ENCODE measurements at regions of chr7 and their contacts with region 1.

Region 1: DNA sequence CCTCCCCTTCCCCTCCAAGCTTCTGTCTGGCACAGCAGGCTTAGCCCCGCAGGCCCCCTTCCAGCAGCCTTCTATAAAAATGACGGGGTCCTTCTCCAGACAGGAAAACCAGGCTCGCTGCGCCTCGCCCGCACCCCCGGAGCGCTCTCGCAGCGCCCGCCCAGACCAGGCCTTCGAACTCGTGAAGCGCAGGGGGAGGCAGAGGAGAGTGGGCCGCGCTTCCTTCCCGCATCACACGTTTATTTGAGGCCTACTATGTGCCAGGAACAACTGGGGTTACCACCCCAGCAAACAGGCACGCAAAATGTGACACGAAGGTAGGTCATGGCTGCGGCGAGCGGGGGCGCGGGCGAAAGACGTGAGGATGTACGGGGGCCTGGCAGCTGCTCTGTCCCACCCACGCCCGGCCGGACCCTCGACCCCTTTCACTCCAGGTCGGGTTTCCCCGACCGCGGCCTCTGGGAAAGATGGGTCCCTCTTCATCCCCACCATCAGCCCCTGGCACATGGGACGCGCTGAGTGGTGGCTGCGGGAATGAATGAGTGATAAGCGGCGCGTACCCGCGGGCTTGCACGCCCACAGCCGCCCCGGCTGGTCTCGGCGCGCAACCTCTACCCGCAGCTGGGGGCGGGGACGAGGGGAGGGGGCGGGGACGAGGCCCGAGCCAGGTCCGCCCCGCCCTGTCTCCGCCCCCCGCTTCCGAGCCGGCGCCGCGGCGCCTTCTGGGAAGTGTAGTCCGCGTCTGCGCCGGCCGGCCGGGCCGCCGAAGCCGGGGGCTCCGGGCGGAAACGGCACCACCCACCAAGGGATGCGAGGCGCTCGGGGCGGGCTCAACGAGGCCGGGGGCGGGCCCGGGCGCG is 59.1 kb downstream of the ZNF467 start:
- DNase-seq: peak; percentile 97
- ATAC-seq: peak; percentile 89
- H3K4me3 Mint-ChIP-seq: peak overlapping the region; percentile 82
- H3K27ac Mint-ChIP-seq: peak overlapping the region; percentile 78
- H3K4me1 Mint-ChIP-seq: peaks cover 27% of the 10 kb centered on the region
- H3K27me3 Mint-ChIP-seq: no peaks in the 10 kb centered on the region

Region 2: GRCh38 chr7:149125863-149126661 is 588.2 kb before region 1 on chr7 and contains the start of gene ZNF425:
- CTCF ChIA-PET with region 1: no interaction called
- POLR2A ChIA-PET with region 1: no interaction called
- intact Hi-C with region 1: loop called in 1 of 2 experiments (anchors 2 kb)
- DNase-seq: peak; percentile 96
- ATAC-seq: peak; percentile 88
- H3K4me3 Mint-ChIP-seq: peak within 1 kb of the TSS; percentile 83
- H3K27ac Mint-ChIP-seq: peak within 1 kb of the TSS; percentile 99
- H3K4me1 Mint-ChIP-seq: peaks cover 21% of the 10 kb centered on the region
- H3K27me3 Mint-ChIP-seq: no peaks in the 10 kb centered on the region
- total RNA-seq, gene ZNF425: 0.43 to 0.95 TPM

Region 3: DNA sequence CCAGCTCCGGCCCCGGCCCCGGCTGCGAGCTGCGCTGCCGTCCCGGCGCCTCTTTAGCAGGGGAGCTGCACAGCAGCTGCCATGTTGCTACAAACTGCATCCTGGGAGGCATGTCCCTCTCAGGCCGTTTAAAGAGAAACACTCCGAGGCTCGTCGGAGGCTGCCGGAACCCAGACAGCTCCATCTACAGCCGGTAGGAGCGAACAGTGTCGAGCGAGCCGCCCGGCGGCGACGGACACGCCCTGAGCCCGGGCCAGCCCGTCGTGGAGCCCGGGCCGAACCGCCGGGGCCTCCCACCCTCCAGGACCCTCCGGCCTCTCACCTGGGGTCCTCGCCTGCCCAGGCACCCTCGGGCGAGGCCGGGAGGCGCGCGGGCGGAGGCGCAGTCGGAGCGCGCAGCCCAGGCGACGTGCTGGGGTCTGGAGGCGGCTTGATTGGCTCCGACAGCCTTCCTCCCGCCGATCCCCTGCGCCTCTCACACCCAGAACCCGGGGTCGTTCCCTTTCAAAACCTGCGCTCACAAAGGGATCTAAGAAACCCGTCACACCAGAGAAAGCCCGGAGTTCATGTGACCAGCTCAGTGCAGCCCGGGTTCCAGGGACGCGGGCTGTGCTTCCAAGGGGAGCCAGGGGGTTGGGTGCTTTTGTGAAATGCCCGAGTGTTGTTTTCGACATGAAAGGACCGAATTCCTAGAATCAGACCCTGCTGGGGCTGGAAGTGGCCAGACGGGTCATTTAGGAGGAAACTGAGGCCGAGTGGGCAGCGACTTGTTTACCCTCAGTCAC is 253.6 kb before region 1 on chr7 and contains the start of gene ZNF777:
- CTCF ChIA-PET with region 1: no interaction called
- POLR2A ChIA-PET with region 1: no interaction called
- intact Hi-C with region 1: loop called in 1 of 2 experiments (anchors 2 kb)
- DNase-seq: peak; percentile 90
- ATAC-seq: peak; percentile 96
- H3K4me3 Mint-ChIP-seq: peak within 1 kb of the TSS; percentile 84
- H3K27ac Mint-ChIP-seq: peak within 1 kb of the TSS; percentile 87
- H3K4me1 Mint-ChIP-seq: peaks cover 21% of the 10 kb centered on the region
- H3K27me3 Mint-ChIP-seq: peaks cover 10% of the 10 kb centered on the region
- total RNA-seq, gene ZNF777: 13.3 to 16.4 TPM

Region 4: DNA sequence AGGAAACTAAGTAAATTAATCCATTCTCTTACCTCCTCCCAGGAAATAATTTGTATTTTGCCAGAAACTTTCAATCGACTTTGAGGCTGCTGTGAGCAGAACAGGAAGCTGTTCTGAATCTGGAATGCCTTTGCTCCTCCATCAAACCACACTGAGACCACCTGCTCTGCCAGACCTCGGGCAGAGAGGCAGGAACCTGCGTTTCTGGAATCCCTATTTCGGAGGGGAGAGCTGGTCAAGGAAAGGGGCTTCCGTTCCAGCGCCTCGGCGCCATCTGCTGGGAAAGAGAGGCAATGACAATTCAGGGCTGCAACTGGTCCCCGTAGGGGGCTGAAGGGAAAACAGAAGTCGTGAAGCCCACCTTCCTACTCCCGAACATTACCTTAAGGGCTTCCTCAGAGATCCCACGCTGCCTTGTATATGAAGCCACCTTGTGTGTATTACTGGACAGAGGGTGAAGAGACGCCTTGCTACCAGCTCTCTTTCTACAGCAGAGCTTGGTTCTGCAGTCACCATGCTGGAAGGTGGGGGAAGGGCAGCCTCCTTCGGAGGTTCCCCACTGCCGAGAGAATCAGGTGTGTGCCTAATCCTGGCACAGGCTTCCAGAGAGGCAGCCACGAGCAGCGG is 27.9 kb after region 1 on chr7:
- CTCF ChIA-PET with region 1: interaction called, 8 read pairs
- POLR2A ChIA-PET with region 1: interaction called, 3 read pairs
- intact Hi-C with region 1: loop called in 1 of 2 experiments (anchors 1 kb)
- DNase-seq: peak; percentile 79
- ATAC-seq: peak; percentile 88
- H3K4me3 Mint-ChIP-seq: peak overlapping the region; percentile 65
- H3K27ac Mint-ChIP-seq: no peak overlapping the region
- H3K4me1 Mint-ChIP-seq: peaks cover 10% of the 10 kb centered on the region
- H3K27me3 Mint-ChIP-seq: peaks cover 23% of the 10 kb centered on the region

Region 5: GRCh38 chr7:149873074-149873969 is 159.0 kb after region 1 on chr7 and contains the start of gene ATP6V0E2:
- CTCF ChIA-PET with region 1: no interaction called
- POLR2A ChIA-PET with region 1: no interaction called
- intact Hi-C with region 1: loop called (anchors 1 to 10 kb)
- DNase-seq: peak; percentile 96
- ATAC-seq: peak; percentile 84
- H3K4me3 Mint-ChIP-seq: peak within 1 kb of the TSS; percentile 82
- H3K27ac Mint-ChIP-seq: peak within 1 kb of the TSS; percentile 91
- H3K4me1 Mint-ChIP-seq: peaks cover 74% of the 10 kb centered on the region
- H3K27me3 Mint-ChIP-seq: no peaks in the 10 kb centered on the region
- total RNA-seq, gene ATP6V0E2: 33.9 to 41.3 TPM

Region 6: GRCh38 chr7:151080522-151081169 is 1366.4 kb after region 1 on chr7 and contains the start of gene FASTK:
- CTCF ChIA-PET with region 1: no interaction called
- POLR2A ChIA-PET with region 1: no interaction called
- intact Hi-C with region 1: loop called in 1 of 2 experiments (anchors 10 kb)
- DNase-seq: peak; percentile 94
- ATAC-seq: peak; percentile 89
- H3K4me3 Mint-ChIP-seq: peak within 1 kb of the TSS; percentile 94
- H3K27ac Mint-ChIP-seq: peak within 1 kb of the TSS; percentile 91
- H3K4me1 Mint-ChIP-seq: peaks cover 43% of the 10 kb centered on the region
- H3K27me3 Mint-ChIP-seq: peaks cover 7% of the 10 kb centered on the region
- total RNA-seq, gene FASTK: 56.6 to 56.7 TPM